ENCODE measurements at regions of chr3 and their contacts with region 1.

Region 1: GRCh38 chr3:128426128-128426921 is 40.4 kb downstream of the DNAJB8 start:
- DNase-seq: peak; percentile 82

Region 2: DNA sequence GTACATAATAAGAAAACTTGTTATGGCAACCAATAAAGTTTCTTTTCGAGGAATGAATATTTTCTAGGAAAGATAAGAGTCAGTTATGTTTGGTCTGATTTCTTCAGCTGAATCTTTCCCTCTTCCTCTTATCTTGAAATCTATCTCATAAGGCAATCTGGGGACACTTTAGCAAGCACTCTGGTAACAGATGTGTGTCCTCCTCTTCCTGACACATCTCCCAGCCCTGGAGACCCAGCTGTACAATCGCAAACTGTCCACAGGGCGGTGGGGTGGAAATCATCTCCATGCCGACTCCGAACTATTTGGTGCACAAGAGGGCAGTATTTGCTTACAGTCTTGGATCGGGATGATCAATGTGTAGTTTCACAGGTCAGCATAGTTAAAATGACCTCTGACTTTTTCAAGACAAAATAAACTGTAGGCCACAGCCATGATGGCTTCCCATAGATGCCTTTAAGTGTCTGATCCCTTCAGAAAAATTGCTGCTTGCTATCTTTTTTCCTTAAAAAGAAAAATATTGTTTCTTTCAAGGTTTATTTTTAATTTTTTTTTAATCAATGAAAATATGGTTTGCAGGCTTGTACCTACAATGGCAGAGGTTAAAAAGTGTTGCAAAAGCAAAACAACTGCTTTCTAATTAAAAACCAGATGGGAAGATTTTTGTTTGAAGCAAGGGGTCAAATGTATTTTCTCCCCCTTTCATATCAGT is 255.4 kb before region 1 on chr3:
- intact Hi-C with region 1: loop called (anchors 5 kb)
- DNase-seq: no peak

Region 3: DNA sequence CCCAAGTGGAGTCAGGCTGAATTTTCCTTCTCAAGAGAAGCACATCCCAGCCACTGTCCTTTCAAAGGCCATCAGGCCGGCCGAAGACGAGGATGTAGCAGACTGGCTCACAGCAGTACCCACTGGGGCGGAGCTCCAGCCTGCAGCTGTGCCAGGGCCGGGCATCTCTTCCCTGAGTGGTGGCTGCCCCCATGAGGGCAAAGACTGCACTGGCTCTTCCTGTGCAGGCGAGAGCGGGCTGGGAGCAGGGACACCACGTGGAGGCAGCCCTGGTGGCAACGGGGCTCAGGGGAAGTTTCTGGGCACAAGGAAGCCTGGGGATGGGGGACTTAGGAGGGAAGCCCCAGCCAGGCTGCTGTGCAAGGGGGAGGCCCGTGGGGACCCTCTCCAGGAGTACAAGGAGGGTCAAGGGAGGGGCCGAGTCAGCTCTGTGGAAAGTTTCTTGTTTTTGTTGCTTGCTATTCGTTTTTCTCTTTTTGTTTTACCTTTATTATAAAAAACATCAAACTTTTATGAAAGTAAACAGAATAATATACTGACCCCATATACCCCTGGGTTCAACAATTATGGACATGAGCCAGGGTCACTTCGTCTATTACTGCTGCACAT is 158.2 kb after region 1 on chr3:
- intact Hi-C with region 1: loop called (anchors 2 kb)
- DNase-seq: no peak

Region 4: DNA sequence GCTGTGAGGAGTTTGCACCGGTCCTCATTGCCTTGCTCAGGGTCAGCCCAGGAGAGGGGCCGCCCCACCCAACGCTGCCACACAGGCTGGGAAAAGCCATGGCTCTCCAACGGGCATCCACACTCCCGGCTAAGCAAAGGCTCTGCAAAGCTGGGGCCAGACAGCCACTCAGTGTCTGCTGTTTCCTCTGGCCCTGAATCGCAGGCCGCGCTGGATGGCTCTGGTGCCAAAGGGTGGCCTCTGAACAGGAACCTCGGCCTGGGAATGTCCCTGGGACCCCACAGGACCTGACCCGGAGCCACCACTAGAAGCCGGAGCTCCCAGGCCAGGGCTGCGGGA is 181.4 kb after region 1 on chr3:
- intact Hi-C with region 1: loop called (anchors 1 kb)
- DNase-seq: no peak

Region 5: DNA sequence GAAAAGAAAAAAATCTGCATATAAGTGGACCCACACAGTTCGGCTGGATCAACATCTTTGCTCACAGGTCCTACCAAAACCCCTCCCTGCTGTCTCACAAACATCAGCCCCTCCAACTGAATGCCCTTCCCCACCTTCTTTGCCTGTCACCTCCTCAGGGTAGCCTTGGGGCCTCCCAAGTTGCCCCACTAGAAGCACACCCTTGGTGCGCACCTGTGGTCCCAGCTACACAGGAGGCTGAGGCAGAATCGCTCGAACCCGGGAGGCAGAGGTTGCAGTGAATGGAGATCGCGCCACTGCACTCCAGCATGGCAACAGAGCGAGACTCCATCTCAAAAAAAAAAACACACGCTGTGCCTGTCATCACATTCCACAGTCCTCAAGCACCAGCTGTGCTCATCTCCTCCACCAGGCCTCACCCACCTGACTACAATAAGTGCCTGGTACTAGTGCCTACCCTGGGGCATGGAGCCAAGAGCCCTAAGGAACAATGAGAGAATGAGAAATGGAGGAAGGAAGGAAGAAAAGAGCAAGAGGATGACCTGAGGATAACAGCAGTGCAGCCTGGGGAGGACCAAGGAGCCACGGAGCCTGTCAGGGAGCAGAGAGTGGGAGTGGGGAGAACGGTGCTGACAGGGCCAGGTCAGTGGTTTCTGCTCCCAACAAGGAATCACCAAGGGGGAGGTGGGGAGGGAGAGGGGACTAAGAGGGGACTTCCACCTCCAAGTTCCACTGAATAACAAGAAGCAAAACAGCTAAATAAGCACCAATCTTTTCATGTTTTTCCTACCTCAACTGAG is 198.4 kb after region 1 on chr3:
- intact Hi-C with region 1: no loop called
- DNase-seq: peak; percentile 63

Measured in cardiac septum (tissue), 1 donor.